ENCODE measurements at regions of chr1 and their contacts with region 1.

Region 1: DNA sequence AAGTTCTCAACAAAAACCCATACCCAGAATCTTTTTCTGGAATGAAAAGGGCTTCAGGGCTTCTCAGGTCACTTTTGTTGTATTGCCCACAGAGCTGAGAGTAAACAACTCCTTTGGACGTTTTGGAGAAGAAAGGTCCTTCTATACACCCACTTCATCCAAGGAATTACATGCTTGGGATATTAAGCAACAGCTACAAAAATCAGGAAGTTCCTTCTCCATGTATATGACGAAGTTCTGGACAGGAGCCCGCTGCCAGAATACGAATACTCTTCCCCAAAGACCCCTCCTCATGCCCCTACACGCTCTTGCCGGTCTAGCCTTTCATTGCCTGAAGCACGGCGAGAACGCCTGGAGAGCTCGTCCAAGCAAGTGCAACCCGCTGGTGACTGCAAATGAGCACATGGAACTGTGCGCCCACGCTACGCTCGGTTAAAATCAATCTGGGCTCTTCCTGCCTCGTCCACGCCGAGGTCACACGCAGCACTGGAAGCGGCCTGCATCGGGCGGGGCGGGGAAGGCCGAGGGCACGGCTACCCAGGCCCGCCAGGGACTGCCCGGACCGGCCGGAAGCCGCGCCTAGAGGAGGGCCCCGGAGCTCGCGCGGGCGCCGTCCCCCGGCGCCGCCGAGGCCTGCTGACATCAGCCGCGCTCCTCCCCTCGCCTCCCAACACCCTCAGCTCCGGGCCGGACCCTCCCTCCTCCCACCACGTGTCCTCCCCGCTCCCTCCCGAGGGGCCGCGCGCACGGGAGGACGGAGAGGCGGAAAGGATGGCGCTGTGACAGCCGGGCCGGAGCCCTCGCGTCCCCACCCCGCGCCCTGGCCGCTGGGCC is at the start of gene POGK:
- DNase-seq: peak; percentile 96
- ATAC-seq: peak; percentile 98
- total RNA-seq, gene POGK: 16.5 TPM

Region 2: GRCh38 chr1:166527752-166528151 is 311.2 kb before region 1 on chr1:
- intact Hi-C with region 1: loop called (anchors 10 kb)
- DNase-seq: no peak
- ATAC-seq: no peak

Region 3: GRCh38 chr1:166612886-166613285 is 226.1 kb before region 1 on chr1:
- intact Hi-C with region 1: loop called (anchors 10 kb)
- DNase-seq: no peak
- ATAC-seq: no peak

Region 4: GRCh38 chr1:166695115-166695514 is 143.9 kb before region 1 on chr1:
- intact Hi-C with region 1: no loop called
- DNase-seq: no peak
- ATAC-seq: no peak

Region 5: GRCh38 chr1:166875734-166876539 is 37.0 kb after region 1 on chr1 and contains the start of gene TADA1:
- intact Hi-C with region 1: loop called (anchors 2 kb)
- DNase-seq: peak; percentile 99
- ATAC-seq: peak; percentile 98
- total RNA-seq, gene TADA1: 9.4 TPM

Region 6: GRCh38 chr1:167059045-167059808 is 220.2 kb after region 1 on chr1:
- intact Hi-C with region 1: no loop called
- DNase-seq: no peak
- ATAC-seq: peak; percentile 55

Region 7: DNA sequence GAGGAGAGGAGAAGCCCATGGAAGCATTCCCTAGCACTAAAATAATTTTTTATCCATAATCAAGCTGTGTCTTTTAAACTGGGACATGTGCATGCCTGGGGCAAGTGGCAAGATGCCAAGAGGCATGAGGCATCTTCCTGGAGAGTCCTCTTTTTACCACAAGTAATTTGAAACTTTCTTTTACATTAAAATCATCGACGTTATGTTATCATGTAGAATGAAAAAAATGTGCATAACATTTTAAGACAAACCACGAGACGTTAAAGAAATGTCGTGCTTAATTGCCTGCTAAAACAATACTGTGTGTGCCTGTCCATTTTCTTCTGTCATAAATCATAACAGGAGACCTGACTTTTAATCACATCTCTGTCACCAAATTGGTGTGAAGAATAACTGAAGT is 256.4 kb after region 1 on chr1:
- intact Hi-C with region 1: no loop called
- DNase-seq: peak; percentile 55
- ATAC-seq: no peak

Region 8: GRCh38 chr1:167220537-167221125 is 381.6 kb after region 1 on chr1 and contains the start of gene POU2F1:
- intact Hi-C with region 1: loop called (anchors 5 kb)
- DNase-seq: peak; percentile 100
- ATAC-seq: peak; percentile 96
- total RNA-seq, gene POU2F1: 7.5 TPM

Measured in Right ventricle myocardium inferior (tissue), 1 donor.